ENCODE measurements at regions of chr18 and their contacts with region 1.

Region 1: DNA sequence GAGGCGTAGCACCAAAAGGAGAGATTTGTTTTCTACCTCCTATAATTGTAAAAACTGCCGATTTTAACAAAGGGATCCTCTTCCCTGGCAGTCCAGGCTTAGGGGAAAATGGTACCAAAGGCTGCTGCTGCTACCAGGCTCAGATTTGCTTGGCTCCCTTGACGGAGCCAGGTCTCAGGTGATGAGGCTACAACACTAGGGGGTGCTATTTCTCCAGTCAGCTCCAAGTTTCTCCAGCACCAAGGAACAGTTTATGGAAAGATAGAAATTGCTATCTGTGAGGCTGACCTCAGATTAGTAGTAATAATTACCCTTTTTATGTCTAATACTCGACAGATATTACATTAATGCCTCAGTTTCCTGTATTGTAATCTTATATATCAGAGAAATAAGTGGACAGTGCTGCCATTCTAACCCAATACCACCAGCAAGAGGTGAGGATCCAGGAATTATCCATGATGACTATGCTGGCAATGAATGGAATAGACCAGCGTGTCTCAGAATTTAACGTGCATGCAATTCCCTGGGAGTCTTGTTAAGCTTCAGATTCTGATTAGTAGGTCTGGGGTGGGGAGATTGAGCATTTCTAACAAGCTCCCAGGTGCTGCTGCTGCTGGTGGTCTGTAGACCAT is 111.3 kb downstream of the ESCO1 start:
- DNase-seq: peak; percentile 81
- H3K4me3 Mint-ChIP-seq: no peak overlapping the region
- H3K27ac Mint-ChIP-seq: no peak overlapping the region
- H3K4me1 Mint-ChIP-seq: no peaks in the 10 kb centered on the region
- H3K27me3 Mint-ChIP-seq: peaks cover 9% of the 10 kb centered on the region

Region 2: DNA sequence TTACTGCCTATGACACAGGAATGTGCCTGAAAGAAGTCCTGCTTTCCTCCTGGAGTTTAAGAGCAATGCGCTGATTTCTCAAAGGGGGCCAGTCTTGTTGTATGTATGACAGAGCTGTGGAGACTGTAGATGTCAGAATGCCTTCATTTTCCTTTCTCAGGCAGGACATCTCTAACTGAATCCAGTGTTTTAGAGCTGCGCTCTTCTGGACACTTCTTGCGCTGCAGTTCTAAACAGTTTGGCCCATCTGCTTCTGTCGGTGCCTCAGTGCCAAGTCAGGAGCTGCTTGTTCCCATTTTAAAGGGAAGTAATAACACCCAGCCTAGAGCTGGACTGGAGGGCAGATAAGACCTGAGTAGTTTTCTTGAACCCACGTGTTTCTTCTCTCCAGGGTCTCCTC is 19.8 kb after region 1 on chr18:
- intact Hi-C with region 1: no loop called
- DNase-seq: no peak
- H3K4me3 Mint-ChIP-seq: no peak overlapping the region
- H3K27ac Mint-ChIP-seq: no peak overlapping the region
- H3K4me1 Mint-ChIP-seq: no peaks in the 10 kb centered on the region
- H3K27me3 Mint-ChIP-seq: no peaks in the 10 kb centered on the region

Region 3: DNA sequence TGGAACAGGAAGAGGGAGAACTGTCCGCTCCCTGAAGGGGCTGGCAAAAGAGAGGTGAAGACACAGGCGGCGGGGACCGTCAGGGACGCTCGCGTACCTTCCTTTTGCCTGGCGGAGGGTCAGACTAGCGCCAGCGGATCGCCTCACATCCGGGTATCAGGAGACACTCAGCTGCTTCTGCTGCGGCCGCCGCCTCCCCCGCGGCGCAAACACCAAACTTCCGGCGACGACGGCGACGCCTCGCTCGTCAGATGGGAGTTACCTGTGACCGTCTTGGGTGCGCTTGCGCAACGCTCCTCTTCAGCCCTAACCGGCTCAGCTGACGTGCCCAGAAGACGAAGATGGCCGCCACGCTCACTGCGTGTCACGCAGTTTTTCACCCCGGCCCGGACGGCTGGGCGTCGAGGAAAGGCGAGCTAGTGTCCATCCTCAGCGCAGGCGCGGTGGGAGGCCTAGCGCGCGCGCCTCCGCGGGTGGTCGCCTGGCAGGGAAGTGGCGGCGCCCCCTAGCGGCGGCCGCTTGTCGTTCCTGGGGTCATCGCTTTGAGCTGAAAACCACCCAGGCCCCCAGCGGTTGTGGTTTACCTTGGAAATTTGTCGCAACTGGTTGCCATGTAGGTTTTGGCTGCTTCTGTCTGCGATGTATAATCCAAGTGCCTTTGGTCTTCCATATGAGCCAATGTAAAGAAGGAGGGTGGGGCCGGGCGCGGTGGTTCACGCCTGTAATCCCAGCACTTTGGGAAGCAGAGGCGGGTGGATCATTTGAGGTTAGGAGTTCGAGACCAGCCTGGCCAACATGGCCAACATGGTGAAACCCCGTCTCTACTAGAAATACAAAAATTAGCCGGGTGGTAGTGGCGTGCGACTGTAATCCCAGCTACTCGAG is 111.5 kb after region 1 on chr18 and contains the start of gene ESCO1:
- intact Hi-C with region 1: loop called (anchors 5 kb)
- DNase-seq: peak; percentile 98
- H3K4me3 Mint-ChIP-seq: peak within 1 kb of the TSS; percentile 94
- H3K27ac Mint-ChIP-seq: peak within 1 kb of the TSS; percentile 95
- H3K4me1 Mint-ChIP-seq: peaks cover 26% of the 10 kb centered on the region
- H3K27me3 Mint-ChIP-seq: no peaks in the 10 kb centered on the region
- total RNA-seq, gene ESCO1: 20.0 and 21.5 TPM in 2 replicates